ENCODE measurements at regions of chr2 and their contacts with region 1.

Region 1: GRCh38 chr2:237413777-237414661 is at the start of gene COL6A3:
- DNase-seq: no peak
- H3K4me3 ChIP-seq: peak within 1 kb of the TSS; percentile 30 to 32
- H3K27ac ChIP-seq: peak within 1 kb of the TSS; percentile 73 to 81
- H3K4me1 ChIP-seq: no peaks in the 10 kb centered on the region
- H3K27me3 ChIP-seq: no peaks in the 10 kb centered on the region
- CTCF ChIP-seq: no peak
- POLR2A ChIP-seq: no peak
- total RNA-seq, gene COL6A3: 26.9 to 86.9 TPM

Region 2: GRCh38 chr2:237092920-237093781 is 320.9 kb before region 1 on chr2:
- intact Hi-C with region 1: loop called (anchors 5 kb)
- DNase-seq: peak; percentile 42
- H3K4me3 ChIP-seq: no peak overlapping the region
- H3K27ac ChIP-seq: peak overlapping the region; percentile 7 to 49
- H3K4me1 ChIP-seq: peaks cover 5% of the 10 kb centered on the region
- H3K27me3 ChIP-seq: no peaks in the 10 kb centered on the region
- CTCF ChIP-seq: peak in 3 of 4 experiments; percentile 50 to 69 (median 53)
- POLR2A ChIP-seq: no peak

Region 3: GRCh38 chr2:237122214-237122666 is 291.8 kb before region 1 on chr2:
- intact Hi-C with region 1: loop called (anchors 10 kb)
- DNase-seq: no peak
- H3K4me3 ChIP-seq: no peak overlapping the region
- H3K27ac ChIP-seq: no peak overlapping the region
- H3K4me1 ChIP-seq: no peaks in the 10 kb centered on the region
- H3K27me3 ChIP-seq: no peaks in the 10 kb centered on the region
- CTCF ChIP-seq: peak; percentile 17 to 67 (median 54)
- POLR2A ChIP-seq: no peak

Region 4: DNA sequence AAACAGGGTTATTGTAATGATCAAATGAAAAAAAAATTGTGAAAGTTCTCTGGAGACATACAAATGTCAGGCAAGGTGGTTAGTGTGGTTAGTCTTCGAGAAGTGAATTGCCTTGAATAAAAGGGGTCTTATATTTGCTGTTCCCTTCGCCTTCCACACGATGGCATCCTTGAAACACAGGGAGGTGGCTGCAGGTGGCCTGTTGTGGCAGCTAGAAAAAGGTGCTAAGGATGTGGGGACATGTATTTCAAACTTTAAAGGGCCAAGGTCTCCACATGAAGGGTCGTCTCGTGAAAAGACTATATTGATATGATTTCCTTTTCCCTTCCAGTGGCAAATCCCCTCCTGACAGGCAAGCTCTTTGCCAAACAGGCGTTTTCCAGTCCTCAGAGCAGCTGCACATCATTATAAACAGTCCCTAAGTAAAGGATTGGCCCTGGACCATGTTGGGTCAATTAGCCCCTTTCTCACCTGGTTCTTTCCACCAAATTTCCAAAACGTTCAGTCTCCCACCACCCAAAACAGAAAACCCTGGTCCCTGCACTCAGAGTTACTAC is 259.9 kb before region 1 on chr2:
- intact Hi-C with region 1: loop called (anchors 5 kb)
- DNase-seq: no peak
- H3K4me3 ChIP-seq: no peak overlapping the region
- H3K27ac ChIP-seq: no peak overlapping the region
- H3K4me1 ChIP-seq: no peaks in the 10 kb centered on the region
- H3K27me3 ChIP-seq: no peaks in the 10 kb centered on the region
- CTCF ChIP-seq: peak in 3 of 4 experiments; percentile 44 to 69 (median 63)
- POLR2A ChIP-seq: no peak

Region 5: GRCh38 chr2:237171396-237171795 is 242.6 kb before region 1 on chr2:
- intact Hi-C with region 1: loop called (anchors 2 kb)
- DNase-seq: peak; percentile 19
- H3K4me3 ChIP-seq: no peak overlapping the region
- H3K27ac ChIP-seq: peak overlapping the region; percentile 44 to 62
- H3K4me1 ChIP-seq: no peaks in the 10 kb centered on the region
- H3K27me3 ChIP-seq: no peaks in the 10 kb centered on the region
- CTCF ChIP-seq: peak in 1 of 4 experiments; percentile 38
- POLR2A ChIP-seq: no peak

Region 6: GRCh38 chr2:237572021-237572741 is 158.2 kb after region 1 on chr2:
- intact Hi-C with region 1: loop called (anchors 10 kb)
- DNase-seq: peak; percentile 88
- H3K4me3 ChIP-seq: no peak overlapping the region
- H3K27ac ChIP-seq: peak overlapping the region in 1 of 2 donors; percentile 52
- H3K4me1 ChIP-seq: peaks cover 6% of the 10 kb centered on the region
- H3K27me3 ChIP-seq: no peaks in the 10 kb centered on the region
- CTCF ChIP-seq: peak; percentile 96 to 99 (median 99)
- POLR2A ChIP-seq: no peak

Measured in prostate gland (tissue), 2 donors.